Endothelial cell of umbilical vein (primary cell): ENCODE measurements at regions of chr3 and their contacts with region 1.

Region 1: DNA sequence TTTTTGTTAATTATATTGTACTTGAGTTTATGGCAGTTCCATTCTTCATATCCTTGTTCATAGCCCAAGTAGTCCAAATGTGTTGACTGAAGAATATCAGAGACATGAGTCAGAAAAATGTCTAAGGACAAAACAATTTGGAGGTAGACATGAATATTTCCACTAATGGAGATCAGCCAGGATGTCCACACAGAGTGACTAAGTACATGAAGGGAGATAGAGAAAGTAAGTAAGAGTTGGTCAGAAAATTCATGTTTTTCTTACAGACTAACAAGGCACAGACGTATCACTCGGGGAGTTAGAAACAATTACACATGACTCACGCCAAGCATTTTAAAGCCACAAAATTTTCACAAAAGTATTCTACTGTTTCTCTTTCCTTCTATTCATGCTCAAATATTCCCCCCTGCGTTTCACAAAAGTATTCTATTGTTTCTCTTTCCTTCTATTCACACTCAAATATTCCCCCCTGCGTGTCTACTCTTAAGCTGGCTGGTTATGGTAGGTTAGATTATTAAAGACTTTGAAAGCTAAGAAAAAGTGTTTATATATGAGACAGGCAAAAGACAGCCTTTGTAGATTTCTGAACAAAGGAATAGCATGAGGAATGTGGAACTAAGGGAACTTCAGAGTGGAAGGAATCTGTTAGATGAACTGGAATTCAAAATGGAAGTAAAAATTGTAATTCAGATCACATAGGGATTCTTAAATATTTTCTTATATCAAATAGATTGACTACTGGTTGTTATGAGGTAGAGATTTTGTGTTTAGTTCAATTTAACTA is 648.7 kb upstream of the CCDC54 start:
- DNase-seq: peak; percentile 96
- H3K4me3 ChIP-seq: peak overlapping the region in 1 of 3 experiments; percentile 41
- H3K27ac ChIP-seq: peak overlapping the region; percentile 96
- H3K4me1 ChIP-seq: peaks cover 45% of the 10 kb centered on the region
- H3K27me3 ChIP-seq: no peaks in the 10 kb centered on the region
- CTCF ChIP-seq: no peak
- POLR2A ChIP-seq: no peak

Region 2: DNA sequence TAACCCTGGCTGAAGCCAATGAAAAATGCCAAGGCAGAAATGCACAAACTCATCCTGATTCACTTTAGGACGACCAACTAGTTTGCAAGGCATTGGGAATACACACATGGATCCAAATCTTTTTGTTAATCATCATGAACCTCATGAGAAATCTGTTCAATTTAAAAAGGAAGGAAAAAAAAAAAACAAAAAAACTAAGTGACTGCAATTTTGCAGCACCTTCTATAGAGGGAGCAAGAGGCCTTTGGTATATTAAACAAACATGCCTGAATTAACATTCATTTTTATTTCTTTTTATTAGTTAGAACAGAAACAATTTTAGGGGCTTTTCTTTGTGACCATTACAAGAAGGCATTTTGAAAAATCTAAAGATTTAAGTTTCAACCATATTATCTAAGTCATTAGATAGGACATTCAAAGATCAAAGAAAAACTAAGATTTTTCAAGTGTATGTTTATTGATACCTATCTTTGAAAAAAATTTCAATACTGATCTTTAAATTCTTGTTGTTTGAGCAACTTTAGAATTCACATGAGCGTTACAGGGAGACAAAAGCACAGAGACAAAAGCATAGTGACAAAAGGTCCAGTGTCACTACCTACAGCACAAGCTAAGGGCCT is 1042.1 kb before region 1 on chr3:
- CTCF ChIA-PET with region 1: no interaction called
- POLR2A ChIA-PET with region 1: no interaction called
- dilution Hi-C with region 1: no loop called
- intact Hi-C with region 1: loop called (anchors 10 kb)
- DNase-seq: peak; percentile 24
- H3K4me3 ChIP-seq: no peak overlapping the region
- H3K27ac ChIP-seq: no peak overlapping the region
- H3K4me1 ChIP-seq: no peaks in the 10 kb centered on the region
- H3K27me3 ChIP-seq: no peaks in the 10 kb centered on the region
- CTCF ChIP-seq: peak; percentile 58
- POLR2A ChIP-seq: no peak

Region 3: DNA sequence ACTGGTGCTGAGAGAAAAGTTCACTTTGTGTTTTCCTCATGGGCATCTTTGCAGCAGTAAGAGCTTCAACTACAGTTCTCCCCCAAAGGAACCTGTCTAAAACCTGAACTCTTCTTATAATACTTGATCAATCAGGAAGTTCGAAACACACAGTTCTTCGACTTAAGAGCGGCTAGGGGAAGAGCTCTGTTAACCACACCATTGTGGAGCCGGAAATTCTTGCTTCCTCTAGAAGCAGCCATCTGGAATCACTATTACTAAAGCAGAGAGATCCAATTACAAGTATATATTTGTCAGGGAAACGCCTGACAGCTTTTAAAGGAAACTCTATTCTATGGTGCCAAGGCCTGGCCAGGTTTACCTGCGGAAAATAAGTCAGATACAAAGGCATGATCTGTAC is 522.4 kb before region 1 on chr3:
- CTCF ChIA-PET with region 1: no interaction called
- POLR2A ChIA-PET with region 1: no interaction called
- dilution Hi-C with region 1: no loop called
- intact Hi-C with region 1: loop called (anchors 5 kb)
- DNase-seq: peak; percentile 83
- H3K4me3 ChIP-seq: peak overlapping the region in 1 of 3 experiments; percentile 35
- H3K27ac ChIP-seq: peak overlapping the region; percentile 32
- H3K4me1 ChIP-seq: peaks cover 16% of the 10 kb centered on the region
- H3K27me3 ChIP-seq: no peaks in the 10 kb centered on the region
- CTCF ChIP-seq: no peak
- POLR2A ChIP-seq: no peak

Region 4: GRCh38 chr3:106403371-106404145 is 324.9 kb before region 1 on chr3:
- CTCF ChIA-PET with region 1: no interaction called
- POLR2A ChIA-PET with region 1: no interaction called
- dilution Hi-C with region 1: no loop called
- intact Hi-C with region 1: no loop called
- DNase-seq: no peak
- H3K4me3 ChIP-seq: no peak overlapping the region
- H3K27ac ChIP-seq: no peak overlapping the region
- H3K4me1 ChIP-seq: no peaks in the 10 kb centered on the region
- H3K27me3 ChIP-seq: no peaks in the 10 kb centered on the region
- CTCF ChIP-seq: no peak
- POLR2A ChIP-seq: no peak

Region 5: GRCh38 chr3:106466881-106467280 is 261.6 kb before region 1 on chr3:
- CTCF ChIA-PET with region 1: no interaction called
- POLR2A ChIA-PET with region 1: no interaction called
- dilution Hi-C with region 1: no loop called
- intact Hi-C with region 1: no loop called
- DNase-seq: no peak
- H3K4me3 ChIP-seq: no peak overlapping the region
- H3K27ac ChIP-seq: no peak overlapping the region
- H3K4me1 ChIP-seq: no peaks in the 10 kb centered on the region
- H3K27me3 ChIP-seq: no peaks in the 10 kb centered on the region
- CTCF ChIP-seq: no peak
- POLR2A ChIP-seq: no peak

Region 6: DNA sequence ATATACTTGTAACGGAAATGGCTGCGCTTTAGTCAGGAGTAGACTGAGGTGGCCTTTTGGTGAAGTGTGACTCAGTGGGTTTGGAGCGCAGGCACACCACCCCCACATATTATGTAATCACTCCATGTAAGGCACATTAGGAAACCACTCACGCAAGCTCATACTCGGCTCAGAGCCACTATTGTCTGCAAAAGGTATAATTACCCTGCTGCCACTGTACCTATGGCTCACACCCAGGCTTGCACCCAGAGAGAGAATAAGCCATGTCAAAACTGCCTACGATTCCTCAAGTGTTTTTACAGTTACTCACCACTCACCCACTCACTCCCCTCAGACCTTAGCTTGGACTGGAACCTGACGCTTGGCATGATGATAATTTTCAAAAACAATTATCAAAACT is 36.8 kb after region 1 on chr3:
- CTCF ChIA-PET with region 1: no interaction called
- POLR2A ChIA-PET with region 1: no interaction called
- dilution Hi-C with region 1: no loop called
- intact Hi-C with region 1: loop called (anchors 1 kb)
- DNase-seq: peak; percentile 10
- H3K4me3 ChIP-seq: no peak overlapping the region
- H3K27ac ChIP-seq: no peak overlapping the region
- H3K4me1 ChIP-seq: peaks cover 2% of the 10 kb centered on the region
- H3K27me3 ChIP-seq: no peaks in the 10 kb centered on the region
- CTCF ChIP-seq: no peak
- POLR2A ChIP-seq: no peak

Region 7: DNA sequence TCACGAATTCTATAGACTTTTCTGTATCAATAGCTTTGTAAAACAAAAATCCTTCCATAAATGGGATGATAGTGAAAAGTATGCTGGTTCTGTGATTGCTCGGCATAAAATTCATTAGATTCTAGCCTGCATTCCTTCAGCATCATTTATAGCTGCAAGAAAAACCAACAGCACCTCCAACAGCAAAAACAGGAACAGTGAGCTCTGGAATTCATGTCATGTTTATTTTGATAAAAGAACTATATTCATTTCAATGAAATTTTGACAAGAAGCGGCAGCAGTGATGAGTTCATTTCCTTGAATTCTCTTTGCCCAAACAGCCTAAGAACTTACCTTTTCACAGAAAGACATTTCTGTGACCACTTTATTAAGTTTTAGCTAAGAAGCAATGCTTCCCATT is 133.6 kb after region 1 on chr3:
- CTCF ChIA-PET with region 1: interaction called, 8 read pairs
- POLR2A ChIA-PET with region 1: no interaction called
- dilution Hi-C with region 1: no loop called
- intact Hi-C with region 1: loop called (anchors 5 kb)
- DNase-seq: peak; percentile 79
- H3K4me3 ChIP-seq: no peak overlapping the region
- H3K27ac ChIP-seq: peak overlapping the region; percentile 2
- H3K4me1 ChIP-seq: peaks cover 13% of the 10 kb centered on the region
- H3K27me3 ChIP-seq: no peaks in the 10 kb centered on the region
- CTCF ChIP-seq: peak; percentile 29 to 41
- POLR2A ChIP-seq: no peak